AG04449 (cell line): ENCODE measurements at regions of chr13 and their contacts with region 1.

Region 1: GRCh38 chr13:29923554-29924481 is 73.4 kb upstream of the UBL3 start:
- DNase-seq: peak; percentile 97
- H3K4me3 ChIP-seq: peak overlapping the region; percentile 16; the same call in 1 of the 2 replicates
- CTCF ChIP-seq: peak; percentile 89

Region 2: GRCh38 chr13:29605860-29606526 is 317.8 kb before region 1 on chr13:
- CTCF ChIA-PET with region 1: no interaction called
- POLR2A ChIA-PET with region 1: no interaction called
- DNase-seq: no peak
- H3K4me3 ChIP-seq: no peak overlapping the region
- CTCF ChIP-seq: no peak

Region 3: DNA sequence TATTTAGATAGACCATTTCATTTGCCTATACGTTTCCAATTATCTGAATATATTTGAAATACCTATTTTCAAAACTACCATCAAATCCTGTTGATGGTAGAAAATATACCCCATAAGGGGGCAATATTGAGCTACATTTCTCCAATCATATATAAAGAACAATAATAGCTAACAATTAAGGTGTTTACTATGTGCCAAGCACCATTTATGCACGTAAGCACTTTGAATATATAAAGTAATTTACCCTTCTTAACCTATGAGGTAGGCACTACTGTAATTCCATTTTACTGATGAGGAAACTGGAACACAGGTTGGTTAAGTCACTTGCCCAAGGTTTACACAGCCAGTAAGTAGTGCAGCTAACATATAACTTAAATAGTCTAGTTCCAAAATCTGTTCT is 152.6 kb before region 1 on chr13:
- CTCF ChIA-PET with region 1: interaction called, 20 read pairs
- POLR2A ChIA-PET with region 1: no interaction called
- DNase-seq: no peak
- H3K4me3 ChIP-seq: no peak overlapping the region
- CTCF ChIP-seq: peak; percentile 4

Region 4: GRCh38 chr13:29861694-29862110 is 62.1 kb before region 1 on chr13:
- CTCF ChIA-PET with region 1: interaction called, 7 read pairs
- POLR2A ChIA-PET with region 1: interaction called, 12 read pairs
- DNase-seq: peak; percentile 98
- H3K4me3 ChIP-seq: no peak overlapping the region
- CTCF ChIP-seq: no peak

Region 5: GRCh38 chr13:29935309-29935981 is 11.6 kb after region 1 on chr13:
- CTCF ChIA-PET with region 1: interaction called, 51 read pairs
- POLR2A ChIA-PET with region 1: no interaction called
- DNase-seq: no peak
- H3K4me3 ChIP-seq: no peak overlapping the region
- CTCF ChIP-seq: no peak

Region 6: DNA sequence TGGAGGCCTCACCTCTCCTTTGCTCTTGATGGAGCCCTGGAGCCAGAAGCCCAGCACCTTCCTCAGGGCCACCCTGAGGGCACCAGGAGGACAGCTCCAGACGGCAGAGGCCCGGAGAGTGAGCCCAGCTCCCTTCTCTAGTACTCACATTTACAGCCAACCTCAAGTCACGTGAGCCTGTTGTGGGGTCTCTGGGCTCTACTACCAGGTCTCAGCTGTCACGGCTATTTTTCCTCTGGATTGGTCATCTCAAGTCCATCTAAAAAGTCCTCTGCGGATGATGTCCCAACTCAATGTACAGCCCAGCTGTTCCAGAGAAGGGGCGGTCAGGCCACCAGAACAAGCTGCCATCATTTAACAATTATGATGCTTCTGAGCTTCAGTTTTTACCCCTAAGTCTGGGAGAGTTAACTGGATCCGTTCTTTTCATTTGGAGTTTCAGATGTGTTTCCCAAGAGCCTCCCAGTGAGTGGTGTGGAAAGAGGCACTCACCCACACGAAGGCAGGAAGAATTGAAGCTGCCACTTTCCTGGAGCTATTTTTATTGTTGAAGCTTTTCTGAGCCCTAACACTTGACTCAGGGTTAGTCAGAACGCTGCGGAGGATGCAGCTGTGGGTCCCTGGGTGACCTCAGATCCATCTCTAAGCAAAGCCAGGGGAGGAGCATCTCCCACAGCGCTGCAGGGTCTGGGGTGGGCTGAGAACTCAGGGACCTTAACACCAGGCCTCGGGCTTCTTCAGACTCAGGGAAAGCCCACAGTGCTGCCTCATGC is 70.1 kb after region 1 on chr13:
- CTCF ChIA-PET with region 1: interaction called, 11 read pairs
- POLR2A ChIA-PET with region 1: interaction called, 5 read pairs
- DNase-seq: peak; percentile 38
- H3K4me3 ChIP-seq: no peak overlapping the region
- CTCF ChIP-seq: no peak